ENCODE measurements at regions of chr6 and their contacts with region 1.

Region 1: DNA sequence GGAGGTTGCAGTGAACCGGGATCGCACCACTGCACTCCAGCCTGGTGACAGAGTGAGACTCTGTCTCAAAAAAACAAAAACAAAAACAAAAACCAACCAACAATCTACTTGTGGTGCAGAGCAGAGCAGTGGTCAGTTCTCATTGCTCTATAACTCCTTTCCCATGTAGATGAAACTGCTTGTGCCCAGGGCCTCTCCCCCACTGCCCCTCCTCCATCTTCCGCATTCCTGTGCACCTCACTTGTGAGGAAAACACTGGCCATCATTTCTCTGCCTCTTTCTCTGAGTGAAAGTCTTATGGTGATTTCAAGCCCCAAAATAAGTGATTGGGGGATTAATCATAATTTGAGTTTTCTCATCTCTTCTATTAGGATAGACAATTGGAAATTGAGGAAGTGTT is 63.9 kb upstream of the GLP1R start:
- DNase-seq: no peak
- CTCF ChIP-seq: no peak

Region 2: DNA sequence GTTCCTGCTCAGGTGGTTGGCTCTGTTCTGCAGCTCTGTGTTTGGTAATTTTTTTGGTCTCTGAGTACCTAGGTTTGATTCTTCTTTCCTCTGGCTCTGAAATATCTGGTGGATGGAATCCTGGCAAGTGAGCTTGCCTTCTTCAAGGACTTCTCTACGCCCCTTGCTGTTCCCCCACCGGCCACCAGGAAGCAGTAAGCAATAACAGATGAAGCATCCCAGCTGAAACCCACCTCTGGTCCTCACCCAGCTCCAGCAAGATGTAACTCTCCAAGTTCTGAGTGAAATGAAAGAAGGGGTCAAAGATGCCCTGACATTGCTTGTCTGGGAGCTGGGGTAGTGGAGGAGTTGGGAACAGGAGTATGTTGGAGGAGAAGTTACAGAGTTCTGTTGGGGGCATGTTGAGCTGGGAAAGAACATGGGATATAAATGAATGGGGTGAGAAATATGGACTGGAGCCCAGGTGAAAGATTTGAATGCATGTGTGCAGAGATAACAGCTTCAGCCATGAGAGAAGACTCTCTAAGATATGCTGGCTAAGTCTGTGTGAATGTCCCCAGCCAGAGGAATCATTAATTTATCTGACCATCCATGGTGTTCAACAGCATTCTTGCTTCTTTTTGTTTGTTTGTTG is 12.5 kb after region 1 on chr6:
- CTCF ChIA-PET with region 1: interaction called, 17 read pairs
- POLR2A ChIA-PET with region 1: no interaction called
- DNase-seq: peak; percentile 13
- CTCF ChIP-seq: peak; percentile 30

Measured in GM10248 (cell line).